Caco-2 (cell line): ENCODE measurements at regions of chrX and their contacts with region 1.

Region 1: GRCh38 chrX:150547375-150548115 is 20.9 kb upstream of the MTM1 start:
- DNase-seq: peak in 1 of 2 experiments; percentile 53
- H3K4me3 ChIP-seq: peak overlapping the region; percentile 44
- H3K4me3 Mint-ChIP-seq: peak overlapping the region; percentile 87
- H3K27ac Mint-ChIP-seq: peak overlapping the region; percentile 72
- H3K4me1 ChIP-seq: no peaks in the 10 kb centered on the region
- H3K4me1 Mint-ChIP-seq: no peaks in the 10 kb centered on the region
- H3K27me3 ChIP-seq: no peaks in the 10 kb centered on the region
- H3K27me3 Mint-ChIP-seq: peaks cover 2% of the 10 kb centered on the region
- CTCF ChIP-seq: no peak

Region 2: GRCh38 chrX:150486011-150486410 is 61.5 kb before region 1 on chrX:
- CTCF ChIA-PET with region 1: no interaction called
- POLR2A ChIA-PET with region 1: no interaction called
- intact Hi-C with region 1: no loop called
- DNase-seq: peak in 1 of 2 experiments; percentile 35
- H3K4me3 ChIP-seq: no peak overlapping the region
- H3K4me3 Mint-ChIP-seq: no peak overlapping the region
- H3K27ac Mint-ChIP-seq: no peak overlapping the region
- H3K4me1 ChIP-seq: no peaks in the 10 kb centered on the region
- H3K4me1 Mint-ChIP-seq: no peaks in the 10 kb centered on the region
- H3K27me3 ChIP-seq: no peaks in the 10 kb centered on the region
- H3K27me3 Mint-ChIP-seq: no peaks in the 10 kb centered on the region
- CTCF ChIP-seq: peak; percentile 14 to 67

Region 3: DNA sequence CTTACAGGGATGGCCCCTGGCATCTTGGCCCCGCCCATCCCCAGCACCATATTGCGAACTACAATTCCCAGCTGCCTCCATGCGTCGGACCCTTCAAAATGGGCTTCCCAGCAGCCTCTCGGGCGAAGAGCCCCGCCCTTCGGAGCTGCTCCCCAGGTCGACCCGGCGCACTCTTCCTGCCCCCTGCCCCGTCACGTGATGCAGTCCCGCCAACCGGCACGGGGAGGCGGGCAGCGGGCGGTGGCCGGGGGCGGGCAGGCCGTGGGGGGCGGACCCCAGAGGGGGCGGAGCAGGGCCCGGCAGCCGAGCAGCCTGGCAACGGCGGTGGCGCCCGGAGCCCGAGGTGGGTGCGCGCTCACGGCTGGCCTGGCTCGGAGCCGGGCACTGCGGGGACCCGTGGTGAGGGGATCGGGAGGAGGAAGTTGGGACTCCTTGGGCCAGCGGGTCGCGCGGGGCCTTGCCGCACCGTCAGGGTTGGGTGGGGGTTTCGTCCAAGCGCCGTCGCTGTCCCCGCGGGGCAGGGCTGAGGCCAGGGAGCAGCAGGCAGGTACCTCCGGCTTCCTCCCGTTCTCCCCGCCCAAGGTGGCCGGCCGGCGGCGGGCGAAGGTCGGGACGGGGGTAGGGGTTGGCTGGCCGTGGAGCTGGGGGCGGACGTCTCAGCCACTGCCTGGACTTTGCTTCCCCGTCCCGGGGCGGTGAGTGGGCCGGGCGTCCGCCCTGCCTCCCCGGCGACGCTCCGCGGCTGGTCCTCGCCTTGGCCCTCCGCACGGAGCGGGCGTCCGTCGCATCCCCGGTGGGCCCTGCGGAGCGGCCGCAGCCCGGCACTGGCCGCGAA is 21.0 kb after region 1 on chrX and contains the start of gene MTM1:
- CTCF ChIA-PET with region 1: interaction called, 4 read pairs
- POLR2A ChIA-PET with region 1: no interaction called
- intact Hi-C with region 1: loop called (anchors 1 kb)
- DNase-seq: peak; percentile 94 to 95
- H3K4me3 ChIP-seq: peak within 1 kb of the TSS; percentile 75
- H3K4me3 Mint-ChIP-seq: peak within 1 kb of the TSS; percentile 70
- H3K27ac Mint-ChIP-seq: peak within 1 kb of the TSS; percentile 76
- H3K4me1 ChIP-seq: peaks cover 10% of the 10 kb centered on the region; the same call in 1 of the 2 replicates
- H3K4me1 Mint-ChIP-seq: no peaks in the 10 kb centered on the region
- H3K27me3 ChIP-seq: no peaks in the 10 kb centered on the region
- H3K27me3 Mint-ChIP-seq: no peaks in the 10 kb centered on the region
- CTCF ChIP-seq: no peak
- total RNA-seq, gene MTM1: 9.7 and 10.0 TPM in 2 replicates

Region 4: DNA sequence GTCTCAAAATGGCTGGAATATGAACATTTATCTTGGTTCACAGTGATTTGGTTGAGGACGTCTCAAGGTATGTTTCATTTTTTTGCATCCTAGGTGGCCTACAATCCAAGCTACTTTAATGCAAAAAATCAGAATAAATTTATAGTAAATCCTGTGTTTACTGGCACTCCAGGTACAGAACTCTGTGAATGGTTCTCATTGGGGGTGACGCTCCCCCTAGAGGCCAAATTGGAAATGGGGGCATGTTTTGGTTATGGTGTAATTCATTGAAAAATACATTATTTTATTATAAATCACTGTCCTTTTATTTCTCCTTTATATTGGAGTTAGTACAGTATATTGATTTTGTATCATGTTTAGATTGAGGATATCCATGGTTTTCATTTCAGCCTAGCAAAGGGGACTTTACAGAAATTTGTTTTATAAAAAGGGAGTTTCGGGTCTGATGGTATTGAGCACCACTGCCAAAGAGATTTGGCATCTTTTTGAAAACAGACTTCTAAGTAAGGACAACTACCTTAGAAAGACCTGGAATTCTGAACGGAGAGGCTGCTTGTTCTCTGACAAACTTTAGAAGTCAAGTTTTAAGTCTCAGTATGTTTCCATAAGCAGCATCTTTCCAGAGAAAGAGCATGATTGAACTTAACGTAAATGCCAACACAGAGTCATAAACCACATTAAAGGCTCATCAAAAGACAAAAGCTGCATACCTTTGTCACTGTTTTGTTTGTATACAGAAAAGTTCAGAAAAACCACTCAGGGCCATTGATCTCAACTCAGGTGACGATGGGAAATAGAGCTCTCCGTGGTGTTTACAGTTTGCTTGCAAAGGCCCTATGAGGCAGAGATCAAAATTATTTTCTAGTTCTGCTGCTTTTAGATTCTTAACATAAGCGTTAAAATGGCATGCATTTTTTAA is 40.3 kb after region 1 on chrX:
- CTCF ChIA-PET with region 1: interaction called, 3 read pairs
- POLR2A ChIA-PET with region 1: no interaction called
- intact Hi-C with region 1: loop called (anchors 1 kb)
- DNase-seq: peak in 1 of 2 experiments; percentile 28
- H3K4me3 ChIP-seq: no peak overlapping the region
- H3K4me3 Mint-ChIP-seq: no peak overlapping the region
- H3K27ac Mint-ChIP-seq: no peak overlapping the region
- H3K4me1 ChIP-seq: no peaks in the 10 kb centered on the region
- H3K4me1 Mint-ChIP-seq: no peaks in the 10 kb centered on the region
- H3K27me3 ChIP-seq: no peaks in the 10 kb centered on the region
- H3K27me3 Mint-ChIP-seq: no peaks in the 10 kb centered on the region
- CTCF ChIP-seq: peak; percentile 52 to 65

Region 5: DNA sequence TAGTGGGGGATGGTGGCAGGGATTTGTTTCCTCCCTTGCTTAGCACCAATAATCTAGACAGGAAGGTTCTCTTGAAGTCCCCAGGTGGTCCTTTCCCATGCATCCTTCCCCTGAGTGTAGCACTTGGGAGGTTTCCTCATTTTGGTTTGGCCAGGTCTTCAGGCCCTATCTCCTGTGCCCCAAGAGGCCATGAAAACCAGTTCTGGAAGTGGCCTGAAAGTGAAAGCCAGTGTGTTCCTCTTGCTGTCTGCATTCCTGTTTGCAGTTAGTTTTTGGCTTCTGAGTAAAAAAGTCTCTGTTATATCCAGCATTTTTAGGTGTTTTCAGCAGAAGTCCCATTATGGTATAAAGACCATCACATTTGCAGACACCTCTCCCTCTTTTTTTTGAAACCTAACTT is 80.4 kb after region 1 on chrX:
- CTCF ChIA-PET with region 1: no interaction called
- POLR2A ChIA-PET with region 1: no interaction called
- intact Hi-C with region 1: loop called (anchors 5 kb)
- DNase-seq: no peak
- H3K4me3 ChIP-seq: no peak overlapping the region
- H3K4me3 Mint-ChIP-seq: no peak overlapping the region
- H3K27ac Mint-ChIP-seq: no peak overlapping the region
- H3K4me1 ChIP-seq: no peaks in the 10 kb centered on the region
- H3K4me1 Mint-ChIP-seq: no peaks in the 10 kb centered on the region
- H3K27me3 ChIP-seq: no peaks in the 10 kb centered on the region
- H3K27me3 Mint-ChIP-seq: no peaks in the 10 kb centered on the region
- CTCF ChIP-seq: no peak

Region 6: GRCh38 chrX:150643271-150643670 is 95.7 kb after region 1 on chrX:
- CTCF ChIA-PET with region 1: no interaction called
- POLR2A ChIA-PET with region 1: no interaction called
- intact Hi-C with region 1: loop called (anchors 5 kb)
- DNase-seq: no peak
- H3K4me3 ChIP-seq: no peak overlapping the region
- H3K4me3 Mint-ChIP-seq: no peak overlapping the region
- H3K27ac Mint-ChIP-seq: no peak overlapping the region
- H3K4me1 ChIP-seq: no peaks in the 10 kb centered on the region
- H3K4me1 Mint-ChIP-seq: no peaks in the 10 kb centered on the region
- H3K27me3 ChIP-seq: no peaks in the 10 kb centered on the region
- H3K27me3 Mint-ChIP-seq: no peaks in the 10 kb centered on the region
- CTCF ChIP-seq: no peak

Region 7: GRCh38 chrX:150683536-150684146 is 136.1 kb after region 1 on chrX:
- CTCF ChIA-PET with region 1: interaction called, 3 read pairs
- POLR2A ChIA-PET with region 1: no interaction called
- intact Hi-C with region 1: loop called (anchors 1 kb)
- DNase-seq: peak in 1 of 2 experiments; percentile 29
- H3K4me3 ChIP-seq: no peak overlapping the region
- H3K4me3 Mint-ChIP-seq: no peak overlapping the region
- H3K27ac Mint-ChIP-seq: no peak overlapping the region
- H3K4me1 ChIP-seq: peaks cover 4% of the 10 kb centered on the region; the same call in 1 of the 2 replicates
- H3K4me1 Mint-ChIP-seq: no peaks in the 10 kb centered on the region
- H3K27me3 ChIP-seq: no peaks in the 10 kb centered on the region
- H3K27me3 Mint-ChIP-seq: no peaks in the 10 kb centered on the region
- CTCF ChIP-seq: peak in 1 of 2 experiments; percentile 50